ENCODE measurements at regions of chr10 and their contacts with region 1.

Region 1: GRCh38 chr10:74058658-74059057 is 60.7 kb downstream of the VCL start:
- H3K4me3 Mint-ChIP-seq: no peak overlapping the region
- H3K27ac Mint-ChIP-seq: no peak overlapping the region
- H3K4me1 Mint-ChIP-seq: peaks cover 68% of the 10 kb centered on the region
- H3K27me3 Mint-ChIP-seq: no peaks in the 10 kb centered on the region

Region 2: GRCh38 chr10:74008212-74008731 is 50.4 kb before region 1 on chr10:
- intact Hi-C with region 1: loop called (anchors 10 kb)
- H3K4me3 Mint-ChIP-seq: no peak overlapping the region
- H3K27ac Mint-ChIP-seq: no peak overlapping the region
- H3K4me1 Mint-ChIP-seq: peaks cover 49% of the 10 kb centered on the region
- H3K27me3 Mint-ChIP-seq: no peaks in the 10 kb centered on the region

Region 3: GRCh38 chr10:74026428-74027015 is 32.1 kb before region 1 on chr10:
- intact Hi-C with region 1: loop called (anchors 5 kb)
- H3K4me3 Mint-ChIP-seq: no peak overlapping the region
- H3K27ac Mint-ChIP-seq: no peak overlapping the region
- H3K4me1 Mint-ChIP-seq: peaks cover 44% of the 10 kb centered on the region
- H3K27me3 Mint-ChIP-seq: no peaks in the 10 kb centered on the region

Region 4: GRCh38 chr10:74156919-74157289 is 98.2 kb after region 1 on chr10:
- intact Hi-C with region 1: no loop called
- H3K4me3 Mint-ChIP-seq: no peak overlapping the region
- H3K27ac Mint-ChIP-seq: no peak overlapping the region
- H3K4me1 Mint-ChIP-seq: peaks cover 30% of the 10 kb centered on the region
- H3K27me3 Mint-ChIP-seq: no peaks in the 10 kb centered on the region

Region 5: DNA sequence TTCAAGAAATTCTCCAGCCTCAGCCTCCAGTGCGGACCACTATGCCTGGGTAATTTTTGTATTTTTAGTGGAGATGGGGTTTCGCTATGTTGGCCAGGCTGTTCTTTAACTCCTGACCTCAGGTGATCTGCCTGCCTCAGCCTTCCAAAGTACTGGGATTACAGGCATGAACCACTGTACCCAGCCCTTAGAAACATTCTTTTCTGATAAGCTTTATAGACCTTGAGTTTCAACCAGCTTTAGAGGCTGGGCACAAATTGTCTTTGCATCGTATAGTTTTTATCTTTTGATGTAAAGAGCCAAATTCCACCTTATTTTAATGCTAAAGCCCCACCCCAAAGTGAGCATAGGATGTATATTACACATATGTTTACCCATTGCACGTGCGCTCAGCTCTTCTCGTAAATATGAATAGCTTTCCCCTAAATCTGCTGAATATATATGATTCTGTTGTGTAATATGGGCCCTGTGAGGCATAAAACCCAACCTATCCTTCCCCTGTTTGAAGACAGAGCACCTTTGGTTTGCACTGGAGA is 217.2 kb after region 1 on chr10:
- intact Hi-C with region 1: no loop called
- H3K4me3 Mint-ChIP-seq: no peak overlapping the region
- H3K27ac Mint-ChIP-seq: no peak overlapping the region
- H3K4me1 Mint-ChIP-seq: peaks cover 13% of the 10 kb centered on the region
- H3K27me3 Mint-ChIP-seq: no peaks in the 10 kb centered on the region

Region 6: DNA sequence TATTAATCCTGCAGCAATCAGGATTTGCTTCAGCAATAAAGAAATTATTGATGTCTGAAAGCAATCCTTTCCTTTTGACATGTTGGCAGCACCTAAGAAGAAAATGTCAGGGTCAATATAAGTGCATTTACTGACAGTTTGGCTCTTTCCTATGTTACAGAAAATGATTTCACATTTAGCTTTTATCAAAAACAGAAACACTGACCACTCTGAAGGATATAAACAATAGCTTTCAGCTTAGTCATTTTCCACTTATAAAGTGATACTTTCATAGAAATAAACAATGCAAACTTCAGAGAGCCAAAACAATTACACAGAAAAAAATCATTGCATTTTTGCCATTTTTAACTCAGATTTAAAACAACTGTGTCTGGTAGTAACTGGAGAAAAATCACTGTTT is 442.2 kb after region 1 on chr10:
- intact Hi-C with region 1: no loop called
- H3K4me3 Mint-ChIP-seq: no peak overlapping the region
- H3K27ac Mint-ChIP-seq: no peak overlapping the region
- H3K4me1 Mint-ChIP-seq: peaks cover 20% of the 10 kb centered on the region
- H3K27me3 Mint-ChIP-seq: no peaks in the 10 kb centered on the region